Psoas muscle (tissue), 8 donors: ENCODE measurements at regions of chr5 and their contacts with region 1.

Region 1: DNA sequence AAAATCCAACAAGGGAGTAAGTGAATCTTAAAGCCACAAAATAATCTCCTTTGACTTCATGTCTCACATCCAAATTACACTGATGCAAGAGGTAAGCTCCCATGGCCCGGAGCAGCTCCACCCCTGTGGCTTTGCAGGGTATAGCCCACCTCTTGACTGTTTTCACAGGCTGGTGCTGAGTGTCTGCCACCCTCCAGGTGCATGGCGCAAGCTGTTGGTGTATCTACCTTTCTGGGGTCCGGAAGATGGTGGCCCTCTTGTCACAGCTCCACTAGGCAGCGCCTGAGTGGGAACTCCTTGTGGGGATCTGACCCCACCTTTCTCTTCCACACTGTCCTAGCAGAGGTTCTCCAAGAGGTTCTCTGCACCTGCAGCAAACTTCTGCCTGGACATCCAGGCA is 1051.1 kb upstream of the CDH6 start:
- DNase-seq: no peak
- ATAC-seq: no peak
- H3K4me3 ChIP-seq: no peak overlapping the region
- H3K27ac ChIP-seq: no peak overlapping the region
- H3K4me1 ChIP-seq: no peaks in the 10 kb centered on the region
- H3K27me3 ChIP-seq: no peaks in the 10 kb centered on the region
- CTCF ChIP-seq: no peak

Region 2: DNA sequence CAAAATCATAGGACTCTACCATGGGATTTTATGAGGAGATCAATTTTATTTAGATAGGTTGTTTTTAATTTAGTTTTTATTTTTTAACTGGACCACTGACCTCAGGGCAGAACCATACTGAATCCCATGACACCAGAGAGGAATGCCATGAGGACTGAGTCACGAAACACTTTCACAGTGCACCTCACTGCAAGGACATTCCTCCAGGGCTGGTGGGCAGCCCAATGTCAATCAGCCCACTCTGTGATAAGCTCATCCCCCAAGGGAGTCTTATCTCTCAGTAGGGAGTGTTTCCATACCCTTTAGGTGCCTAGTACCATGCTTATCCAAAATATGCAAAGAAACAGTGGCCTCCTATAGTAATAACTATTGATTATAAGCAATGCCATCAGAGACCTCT is 826.5 kb after region 1 on chr5:
- intact Hi-C with region 1: loop called in 1 of 2 experiments (anchors 10 kb)
- DNase-seq: no peak
- ATAC-seq: no peak
- H3K4me3 ChIP-seq: no peak overlapping the region
- H3K27ac ChIP-seq: no peak overlapping the region
- H3K4me1 ChIP-seq: no peaks in the 10 kb centered on the region
- H3K27me3 ChIP-seq: no peaks in the 10 kb centered on the region
- CTCF ChIP-seq: no peak